H1 (cell line): ENCODE measurements at regions of chr1 and their contacts with region 1.

Region 1: GRCh38 chr1:235597867-235598553 is 51.6 kb downstream of the GNG4 start:
- DNase-seq: no peak
- H3K4me3 ChIP-seq: no peak overlapping the region
- H3K27ac ChIP-seq: no peak overlapping the region
- H3K4me1 ChIP-seq: peaks cover 0 to 9% (median 0%) of the 10 kb centered on the region in 4 experiments; a peak in 2 of 7 replicates
- H3K27me3 ChIP-seq: no peaks in the 10 kb centered on the region
- CTCF ChIP-seq: peak in 2 of 3 experiments; percentile 25 to 48; a peak in 3 of 4 replicates
- EP300 ChIP-seq: no peak
- POLR2A ChIP-seq: no peak
- RAD21 ChIP-seq: peak in 1 of 2 experiments; percentile 34; a peak in 2 of 4 replicates

Region 2: DNA sequence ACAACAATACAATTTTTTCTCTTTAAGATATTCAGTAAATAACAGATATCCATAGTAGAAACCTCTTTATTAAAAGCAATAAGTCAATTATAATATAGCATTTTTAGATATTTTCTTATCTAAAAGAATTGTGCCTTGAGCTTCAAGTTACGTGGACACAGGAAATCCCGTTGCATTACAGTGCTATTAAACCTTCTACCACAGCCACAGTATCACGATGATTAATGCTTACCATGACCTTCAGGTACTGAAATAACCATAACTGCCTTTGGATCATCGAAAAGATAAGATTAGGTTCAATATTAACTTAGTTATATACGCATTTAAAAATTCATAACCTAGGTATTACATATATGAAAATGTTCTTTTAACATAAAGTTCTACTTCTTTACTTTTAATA is 111.7 kb before region 1 on chr1:
- CTCF ChIA-PET with region 1: no interaction called
- POLR2A ChIA-PET with region 1: no interaction called
- DNase-seq: no peak
- H3K4me3 ChIP-seq: no peak overlapping the region
- H3K27ac ChIP-seq: no peak overlapping the region
- H3K4me1 ChIP-seq: no peaks in the 10 kb centered on the region
- H3K27me3 ChIP-seq: no peaks in the 10 kb centered on the region
- CTCF ChIP-seq: no peak
- EP300 ChIP-seq: no peak
- POLR2A ChIP-seq: no peak
- RAD21 ChIP-seq: no peak

Region 3: GRCh38 chr1:235527196-235527814 is 70.7 kb before region 1 on chr1:
- CTCF ChIA-PET with region 1: interaction called, 21 read pairs
- POLR2A ChIA-PET with region 1: no interaction called
- DNase-seq: no peak
- H3K4me3 ChIP-seq: no peak overlapping the region
- H3K27ac ChIP-seq: no peak overlapping the region
- H3K4me1 ChIP-seq: no peaks in the 10 kb centered on the region
- H3K27me3 ChIP-seq: no peaks in the 10 kb centered on the region; a peak in 1 of 7 replicates
- CTCF ChIP-seq: no peak
- EP300 ChIP-seq: no peak
- POLR2A ChIP-seq: no peak
- RAD21 ChIP-seq: no peak

Region 4: GRCh38 chr1:235567812-235568503 is 30.1 kb before region 1 on chr1:
- CTCF ChIA-PET with region 1: interaction called, 17 read pairs
- POLR2A ChIA-PET with region 1: no interaction called
- DNase-seq: no peak
- H3K4me3 ChIP-seq: no peak overlapping the region
- H3K27ac ChIP-seq: no peak overlapping the region
- H3K4me1 ChIP-seq: peaks cover 0 to 2% (median 0%) of the 10 kb centered on the region in 4 experiments; a peak in 1 of 7 replicates
- H3K27me3 ChIP-seq: no peaks in the 10 kb centered on the region
- CTCF ChIP-seq: no peak
- EP300 ChIP-seq: no peak
- POLR2A ChIP-seq: no peak
- RAD21 ChIP-seq: no peak

Region 5: DNA sequence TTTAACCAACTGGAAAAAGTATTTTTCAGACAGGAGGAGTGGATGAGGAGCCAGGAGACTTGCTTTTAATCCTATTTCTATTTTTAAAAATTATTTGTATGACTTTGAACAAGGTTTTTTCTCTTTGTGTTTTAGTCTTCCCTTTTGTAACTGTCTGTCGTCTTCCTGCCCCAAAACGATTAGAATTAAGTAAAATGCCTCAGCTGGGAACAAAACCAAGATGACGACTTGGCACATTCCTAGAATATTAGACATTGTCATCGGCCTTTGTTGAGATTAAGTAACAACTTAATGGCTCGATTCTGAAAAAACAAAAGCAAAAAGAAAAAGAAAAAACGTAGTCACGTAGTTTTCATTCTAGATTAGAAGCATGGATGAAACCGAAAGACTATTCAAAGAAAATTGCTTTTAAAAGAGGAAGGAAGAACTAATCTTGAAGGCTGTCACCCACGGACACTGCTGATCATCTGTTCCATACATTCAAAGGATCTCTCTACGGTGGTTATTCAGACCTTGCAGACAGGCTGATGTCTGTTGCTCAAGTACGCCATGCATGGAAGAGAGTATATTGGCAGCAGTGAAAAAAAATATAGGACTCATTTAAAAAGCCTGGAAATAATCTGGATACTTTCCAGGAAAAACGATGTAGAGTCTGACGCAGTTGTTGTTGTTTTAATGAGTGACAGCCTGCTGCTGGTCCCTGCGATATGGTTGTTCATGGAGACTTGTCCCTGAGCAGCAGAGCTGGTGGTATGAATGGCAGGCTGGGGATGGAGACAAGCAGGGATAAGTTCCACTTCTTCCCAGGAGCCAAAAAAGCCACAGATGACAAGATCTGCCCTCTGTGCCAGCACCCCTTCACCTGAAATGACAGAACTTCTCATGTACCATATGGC is 34.7 kb after region 1 on chr1:
- CTCF ChIA-PET with region 1: interaction called, 193 read pairs
- POLR2A ChIA-PET with region 1: no interaction called
- DNase-seq: no peak
- H3K4me3 ChIP-seq: no peak overlapping the region
- H3K27ac ChIP-seq: no peak overlapping the region
- H3K4me1 ChIP-seq: peaks cover 3 to 11% (median 9%) of the 10 kb centered on the region in 4 experiments; a peak in 6 of 7 replicates
- H3K27me3 ChIP-seq: no peaks in the 10 kb centered on the region
- CTCF ChIP-seq: no peak
- EP300 ChIP-seq: no peak
- POLR2A ChIP-seq: no peak
- RAD21 ChIP-seq: no peak

Region 6: DNA sequence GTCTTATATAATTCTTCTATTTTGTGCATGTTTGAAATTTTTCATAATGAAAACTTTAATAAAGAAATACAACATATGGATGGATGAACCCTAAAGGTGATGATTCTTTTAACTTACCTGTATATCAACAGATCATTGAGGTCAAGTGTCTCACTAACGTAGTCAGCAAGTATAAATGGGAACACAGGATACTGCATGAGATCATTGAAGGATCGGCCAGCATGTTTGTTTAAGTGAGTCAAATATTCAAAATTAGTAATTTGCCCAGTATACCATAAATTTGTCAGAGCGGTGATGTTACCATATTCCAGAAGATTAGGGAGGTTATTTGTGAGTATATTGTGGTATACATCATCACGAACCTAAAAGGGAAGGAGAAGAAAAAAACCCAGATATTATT is 122.5 kb after region 1 on chr1:
- CTCF ChIA-PET with region 1: interaction called, 12 read pairs
- POLR2A ChIA-PET with region 1: no interaction called
- DNase-seq: no peak
- H3K4me3 ChIP-seq: no peak overlapping the region
- H3K27ac ChIP-seq: no peak overlapping the region
- H3K4me1 ChIP-seq: no peaks in the 10 kb centered on the region
- H3K27me3 ChIP-seq: no peaks in the 10 kb centered on the region
- CTCF ChIP-seq: no peak
- EP300 ChIP-seq: no peak
- POLR2A ChIP-seq: no peak
- RAD21 ChIP-seq: no peak

Region 7: DNA sequence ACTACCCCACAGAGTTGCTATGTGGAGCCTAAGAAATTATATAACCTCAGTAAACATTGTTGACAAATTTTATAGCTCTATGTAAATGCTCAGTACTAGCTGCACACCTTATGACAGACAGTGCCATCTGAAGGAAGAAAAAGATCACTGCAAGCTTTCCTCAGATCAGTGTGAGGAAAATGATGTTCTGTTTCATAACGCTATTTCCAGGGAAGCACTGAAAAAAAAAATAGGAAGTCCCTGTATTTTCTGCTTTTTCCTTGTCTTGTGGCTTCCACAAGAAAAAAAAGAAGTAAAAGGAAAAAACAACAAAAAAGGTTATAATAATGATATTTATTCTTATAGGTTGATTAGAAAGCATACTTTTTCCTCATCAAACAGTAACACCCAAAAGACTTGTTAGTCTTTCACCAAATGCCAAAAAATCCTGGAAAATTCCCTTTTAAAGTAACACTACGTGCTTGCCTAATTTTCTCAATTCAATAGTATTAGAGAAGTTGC is 245.5 kb after region 1 on chr1:
- CTCF ChIA-PET with region 1: interaction called, 21 read pairs
- POLR2A ChIA-PET with region 1: no interaction called
- DNase-seq: no peak
- H3K4me3 ChIP-seq: no peak overlapping the region
- H3K27ac ChIP-seq: no peak overlapping the region
- H3K4me1 ChIP-seq: no peaks in the 10 kb centered on the region
- H3K27me3 ChIP-seq: no peaks in the 10 kb centered on the region
- CTCF ChIP-seq: peak in 2 of 3 experiments; percentile 22 to 41; a peak in 2 of 4 replicates
- EP300 ChIP-seq: no peak
- POLR2A ChIP-seq: no peak
- RAD21 ChIP-seq: peak; percentile 54 to 61